K562 (cell line): ENCODE measurements at regions of chr1 and their contacts with region 1.

Region 1: GRCh38 chr1:154578058-154578418 is 10.5 kb downstream of the CHRNB2 start:
- DNase-seq: no peak
- ATAC-seq: no peak
- H3K4me3 ChIP-seq: no peak overlapping the region
- H3K27ac ChIP-seq: no peak overlapping the region
- H3K4me1 ChIP-seq: no peaks in the 10 kb centered on the region
- H3K27me3 ChIP-seq: peaks cover 4 to 9% of the 10 kb centered on the region in 2 experiments; a peak in 4 of 5 replicates
- CTCF ChIP-seq: no peak
- EP300 ChIP-seq: no peak
- POLR2A ChIP-seq: 0 out of 2 replicates have a peak, but pooled peaks have one; percentile 3
- RAD21 ChIP-seq: no peak

Region 2: DNA sequence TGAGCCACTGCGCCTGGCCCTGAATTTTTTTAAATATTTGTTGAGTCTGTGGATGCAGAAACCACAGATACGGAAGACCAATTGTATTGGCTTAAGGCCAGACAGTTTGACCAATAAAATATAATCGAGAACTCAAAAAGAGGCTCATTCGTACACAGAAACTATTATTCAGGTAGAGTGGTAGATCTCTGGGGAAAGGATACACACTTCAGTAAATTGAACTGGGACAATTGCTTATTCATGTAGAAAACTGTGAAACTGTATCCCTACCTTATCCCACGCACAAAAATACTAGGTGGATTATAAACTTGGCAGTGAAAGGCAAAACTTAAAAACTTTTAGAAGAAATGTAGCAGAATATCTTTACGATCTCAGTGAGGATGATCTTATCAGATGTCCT is 50.8 kb before region 1 on chr1:
- CTCF ChIA-PET with region 1: no interaction called
- POLR2A ChIA-PET with region 1: no interaction called
- in situ Hi-C with region 1: no loop called
- intact Hi-C with region 1: no loop called
- DNase-seq: no peak
- ATAC-seq: no peak
- H3K4me3 ChIP-seq: no peak overlapping the region
- H3K27ac ChIP-seq: no peak overlapping the region
- H3K4me1 ChIP-seq: no peaks in the 10 kb centered on the region; a peak in 1 of 5 replicates
- H3K27me3 ChIP-seq: peaks cover 0 to 14% of the 10 kb centered on the region in 2 experiments; a peak in 2 of 5 replicates
- CTCF ChIP-seq: no peak
- EP300 ChIP-seq: no peak
- POLR2A ChIP-seq: no peak
- RAD21 ChIP-seq: no peak

Region 3: DNA sequence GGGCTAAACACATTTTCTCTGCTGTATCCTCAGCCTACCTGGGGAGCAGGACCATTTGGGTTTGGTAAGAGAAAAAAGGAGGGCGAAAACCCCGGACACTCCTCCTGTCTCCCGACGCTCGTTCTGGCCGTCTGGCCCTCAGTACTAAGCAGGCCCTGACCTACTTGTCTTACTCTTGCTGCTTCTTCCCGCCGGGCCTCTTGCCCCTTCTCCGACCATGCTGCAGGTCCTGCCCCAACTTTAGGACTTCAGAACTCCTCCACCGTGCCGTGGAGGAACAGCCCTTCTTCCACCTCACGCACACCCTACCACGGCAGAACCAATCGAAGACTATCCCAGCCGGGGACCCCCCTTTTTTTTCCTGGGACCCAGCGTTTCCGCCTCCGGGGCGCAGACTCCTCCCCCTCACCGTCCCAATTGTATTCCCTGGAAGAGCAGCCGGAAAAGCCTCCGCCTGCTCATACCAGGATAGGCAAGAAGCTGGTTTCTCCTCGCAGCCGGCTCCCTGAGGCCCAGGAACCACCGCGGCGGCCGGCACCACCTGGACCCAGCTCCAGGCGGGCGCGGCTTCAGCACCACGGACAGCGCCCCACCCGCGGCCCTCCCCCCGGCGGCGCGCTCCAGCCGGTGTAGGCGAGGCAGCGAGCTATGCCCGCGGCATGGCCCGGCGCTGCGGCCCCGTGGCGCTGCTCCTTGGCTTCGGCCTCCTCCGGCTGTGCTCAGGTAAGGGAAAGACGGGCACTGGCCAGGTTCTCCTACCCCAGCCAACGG is 10.5 kb before region 1 on chr1 and contains the start of gene CHRNB2:
- CTCF ChIA-PET with region 1: no interaction called
- POLR2A ChIA-PET with region 1: interaction called, 11 read pairs
- in situ Hi-C with region 1: no loop called
- intact Hi-C with region 1: no loop called
- DNase-seq: peak; percentile 72 to 95 (median 92)
- ATAC-seq: peak; percentile 100
- H3K4me3 ChIP-seq: no peak within 1 kb of the TSS
- H3K27ac ChIP-seq: no peak within 1 kb of the TSS
- H3K4me1 ChIP-seq: peaks cover 0 to 17% of the 10 kb centered on the region in 2 experiments; a peak in 2 of 5 replicates
- H3K27me3 ChIP-seq: peaks cover 27 to 82% of the 10 kb centered on the region in 2 experiments; a peak in 4 of 5 replicates
- CTCF ChIP-seq: no peak
- EP300 ChIP-seq: no peak
- POLR2A ChIP-seq: no peak
- RAD21 ChIP-seq: no peak
- polyA plus RNA-seq, gene CHRNB2: 0.01 TPM in 1 of 2 experiments, not detected in the other

Region 4: GRCh38 chr1:154847891-154848290 is 269.9 kb after region 1 on chr1:
- CTCF ChIA-PET with region 1: no interaction called
- POLR2A ChIA-PET with region 1: no interaction called
- in situ Hi-C with region 1: no loop called
- intact Hi-C with region 1: no loop called
- DNase-seq: no peak
- ATAC-seq: no peak
- H3K4me3 ChIP-seq: no peak overlapping the region
- H3K27ac ChIP-seq: no peak overlapping the region
- H3K4me1 ChIP-seq: peaks cover 0 to 13% of the 10 kb centered on the region in 2 experiments; a peak in 1 of 5 replicates
- H3K27me3 ChIP-seq: peaks cover 39 to 68% of the 10 kb centered on the region in 2 experiments
- CTCF ChIP-seq: no peak
- EP300 ChIP-seq: no peak
- POLR2A ChIP-seq: no peak
- RAD21 ChIP-seq: no peak